Aorta (tissue), 5 donors: ENCODE measurements at regions of chr11 and their contacts with region 1.

Region 1: DNA sequence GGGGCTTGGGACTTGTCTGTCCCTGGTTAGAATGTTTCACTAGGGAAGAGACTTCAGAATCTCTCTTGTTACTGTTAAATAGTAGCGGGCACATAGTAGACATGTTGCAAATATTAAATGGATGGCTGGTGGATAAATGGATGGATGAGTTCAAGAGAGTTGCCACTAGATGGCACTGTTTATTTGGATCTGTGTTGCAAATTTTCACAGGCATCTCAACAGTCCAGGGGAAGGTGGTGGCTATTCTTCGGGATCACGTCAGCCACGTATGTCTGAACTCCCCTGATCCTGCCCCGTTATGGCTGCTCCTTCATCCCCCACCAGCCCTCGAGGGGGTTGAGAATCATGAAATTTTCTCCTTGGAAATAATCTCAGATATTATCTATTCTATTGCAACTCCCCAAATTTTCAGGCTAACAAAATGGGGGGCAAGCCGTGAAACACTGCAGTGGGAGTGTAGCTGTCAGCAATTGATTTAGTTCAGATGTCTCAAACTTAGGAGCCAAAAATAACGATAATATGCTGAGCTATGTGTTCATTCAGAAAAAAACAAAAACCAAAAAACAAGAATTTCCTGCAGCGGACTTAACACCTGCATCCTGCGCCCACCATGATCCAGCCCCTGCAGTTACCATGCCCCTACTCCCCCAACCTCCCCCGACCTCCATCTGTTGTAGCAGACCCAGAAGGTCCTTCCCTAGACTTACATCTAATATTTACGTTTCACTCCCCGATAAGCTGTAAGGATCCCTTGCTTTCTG is 29.1 kb upstream of the BIRC3 start:
- DNase-seq: peak in 1 of 2 donors; percentile 51
- ATAC-seq: peak; percentile 85
- H3K4me3 ChIP-seq: no peak overlapping the region
- H3K27ac ChIP-seq: peak overlapping the region in 1 of 2 donors; percentile 38
- H3K4me1 ChIP-seq: peaks cover 2 to 3% of the 10 kb centered on the region in 2 donors
- H3K27me3 ChIP-seq: no peaks in the 10 kb centered on the region

Region 2: DNA sequence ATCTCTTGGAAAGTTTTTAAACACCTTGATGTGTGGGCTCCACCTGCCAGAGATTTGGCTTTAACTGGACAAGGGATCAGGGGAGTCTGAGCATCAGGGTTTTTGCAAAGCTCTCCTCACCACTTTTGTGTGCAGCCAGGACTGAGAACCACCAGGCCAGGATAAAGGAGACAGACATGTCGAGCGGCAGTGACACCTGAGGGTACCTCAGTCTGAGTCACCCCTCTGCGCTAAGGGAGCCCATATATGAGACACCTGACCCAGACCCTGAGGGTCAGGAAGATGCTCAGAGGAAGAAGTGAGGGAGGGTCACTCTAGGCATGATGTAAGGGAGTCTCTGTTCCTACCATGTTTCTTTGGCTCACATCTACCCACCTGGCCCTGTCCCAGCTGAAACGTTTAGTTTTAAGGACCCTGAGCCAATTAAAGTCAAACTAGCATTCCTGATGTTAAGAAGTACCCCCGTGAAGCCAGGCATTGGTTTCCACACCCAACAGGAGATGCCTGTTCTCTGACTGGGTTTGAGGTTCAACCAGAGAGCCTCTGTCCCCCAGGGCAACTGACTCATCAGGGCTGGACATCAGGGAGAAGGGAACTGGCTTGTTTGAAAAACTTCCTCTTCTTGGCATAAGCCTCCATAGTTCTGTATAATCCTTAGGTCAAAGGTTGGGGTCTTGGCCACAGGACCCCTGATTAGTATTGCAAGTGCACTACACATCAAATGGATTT is 43.3 kb before region 1 on chr11:
- intact Hi-C with region 1: no loop called
- DNase-seq: no peak
- ATAC-seq: no peak
- H3K4me3 ChIP-seq: no peak overlapping the region
- H3K27ac ChIP-seq: no peak overlapping the region
- H3K4me1 ChIP-seq: no peaks in the 10 kb centered on the region
- H3K27me3 ChIP-seq: no peaks in the 10 kb centered on the region

Region 3: DNA sequence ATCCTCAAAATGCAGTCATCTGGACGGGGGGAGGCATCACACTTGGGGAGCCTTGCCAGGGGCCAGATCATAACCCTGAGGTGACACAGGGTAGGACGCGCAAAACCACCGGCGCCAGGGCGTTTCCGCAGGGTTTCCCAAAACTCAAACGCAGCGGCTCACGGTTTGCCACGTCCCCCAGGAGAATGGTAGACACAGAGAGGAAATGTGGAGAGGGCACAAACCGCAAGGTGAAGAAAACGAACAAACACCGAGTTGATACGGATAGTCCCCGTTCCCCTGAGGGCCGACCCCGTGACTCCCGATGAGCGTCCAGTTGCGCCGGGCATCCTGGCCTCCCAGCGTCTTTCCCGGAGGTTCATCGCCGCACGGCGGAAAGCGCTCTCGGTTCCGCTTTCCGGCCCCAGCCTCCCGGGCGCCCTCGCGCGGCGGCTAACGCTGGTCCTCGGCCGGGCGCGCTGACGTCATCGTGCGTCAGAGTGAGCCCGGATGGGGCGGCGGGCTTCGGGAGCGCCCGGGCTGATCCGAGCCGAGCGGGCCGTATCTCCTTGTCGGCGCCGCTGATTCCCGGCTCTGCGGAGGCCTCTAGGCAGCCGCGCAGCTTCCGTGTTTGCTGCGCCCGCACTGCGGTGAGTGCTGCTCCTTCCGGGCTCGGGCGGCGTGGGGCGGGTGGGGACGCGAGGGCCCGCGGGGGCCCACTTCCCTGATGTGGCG is 58.8 kb after region 1 on chr11 and contains the start of gene BIRC2:
- intact Hi-C with region 1: loop called (anchors 5 kb)
- DNase-seq: peak; percentile 96 to 99
- ATAC-seq: peak; percentile 99
- H3K4me3 ChIP-seq: peak within 1 kb of the TSS; percentile 97 to 100
- H3K27ac ChIP-seq: peak within 1 kb of the TSS; percentile 82 to 97
- H3K4me1 ChIP-seq: peaks cover 0 to 2% of the 10 kb centered on the region in 2 donors
- H3K27me3 ChIP-seq: no peaks in the 10 kb centered on the region
- total RNA-seq, gene BIRC2: 41.1 to 51.2 TPM

Region 4: DNA sequence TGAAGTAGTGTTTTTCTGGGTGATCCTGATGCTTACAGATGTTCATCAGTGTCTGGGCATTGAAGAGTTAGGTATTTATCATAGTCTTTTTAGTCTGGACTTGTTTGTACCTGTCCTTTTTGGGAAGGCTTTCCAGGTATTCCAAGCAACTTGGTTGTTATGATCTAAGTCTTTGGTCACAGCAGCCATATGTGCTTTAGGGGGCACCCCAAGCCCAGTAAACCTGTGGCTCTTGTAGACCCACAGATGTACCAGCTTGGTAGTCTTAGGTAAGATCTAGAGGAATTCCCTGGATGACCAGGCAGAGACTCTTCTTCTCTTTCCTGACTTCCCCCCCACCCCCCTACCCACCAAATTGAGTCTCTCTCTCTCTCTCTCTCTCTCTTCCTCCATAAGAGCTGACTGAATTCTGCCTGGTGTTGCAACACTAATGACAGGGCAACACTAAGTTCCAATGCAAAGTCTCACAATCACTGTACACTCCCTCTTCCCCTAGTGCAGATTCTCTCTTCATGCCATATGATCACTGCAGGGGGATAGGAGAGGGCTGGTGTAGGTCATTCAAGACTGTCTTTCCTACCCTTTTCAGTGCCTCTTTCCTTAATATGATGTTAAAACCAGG is 461.1 kb after region 1 on chr11:
- intact Hi-C with region 1: no loop called
- DNase-seq: no peak
- ATAC-seq: no peak
- H3K4me3 ChIP-seq: no peak overlapping the region
- H3K27ac ChIP-seq: no peak overlapping the region
- H3K4me1 ChIP-seq: no peaks in the 10 kb centered on the region
- H3K27me3 ChIP-seq: no peaks in the 10 kb centered on the region